Dorsolateral prefrontal cortex (tissue), 120 donors: ENCODE measurements at regions of chr2 and their contacts with region 1.

Region 1: GRCh38 chr2:229780856-229781773 is 66.8 kb upstream of the DNER start:
- DNase-seq: no peak
- H3K4me3 ChIP-seq: no peak overlapping the region
- H3K27ac ChIP-seq: peak overlapping the region in 51 of 59 donors; percentile 2 to 85 (median 67)
- H3K27me3 ChIP-seq: no peaks in the 10 kb centered on the region
- CTCF ChIP-seq: peak; percentile 76 to 96 (median 88)

Region 2: GRCh38 chr2:229572507-229573271 is 208.4 kb before region 1 on chr2:
- intact Hi-C with region 1: no loop called
- DNase-seq: no peak
- H3K4me3 ChIP-seq: no peak overlapping the region
- H3K27ac ChIP-seq: no peak overlapping the region
- H3K27me3 ChIP-seq: no peaks in the 10 kb centered on the region
- CTCF ChIP-seq: no peak

Region 3: DNA sequence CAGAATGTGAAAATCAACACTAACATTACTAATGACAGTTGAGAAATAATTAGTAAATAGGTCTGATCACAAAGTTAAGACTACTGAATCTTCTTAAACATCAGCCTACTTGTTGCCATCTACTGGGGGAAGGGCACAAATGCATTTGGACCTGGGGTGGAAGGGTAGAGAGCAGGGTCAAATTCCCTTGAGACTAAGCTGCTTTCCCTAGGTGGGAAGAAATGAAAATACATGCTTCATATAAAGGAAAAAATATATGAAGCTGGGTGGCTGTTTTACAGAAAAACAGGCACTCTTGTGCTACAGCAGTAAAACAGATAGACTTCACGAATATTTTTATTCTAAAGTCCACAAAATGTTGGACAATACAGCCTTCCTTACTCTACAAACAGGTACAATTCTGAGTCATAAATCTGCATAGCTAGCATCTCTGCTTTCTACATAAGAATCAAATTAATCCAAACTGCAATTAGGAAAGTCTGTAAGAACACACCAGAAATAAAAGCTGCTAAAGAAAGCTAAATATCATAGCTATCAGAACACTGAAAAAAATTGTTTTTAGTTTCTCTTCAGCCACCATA is 129.8 kb after region 1 on chr2:
- intact Hi-C with region 1: loop called in 1 of 2 experiments (anchors 10 kb)
- DNase-seq: no peak
- H3K4me3 ChIP-seq: no peak overlapping the region
- H3K27ac ChIP-seq: peak overlapping the region in 2 of 59 donors; percentile 13 to 14
- H3K27me3 ChIP-seq: no peaks in the 10 kb centered on the region
- CTCF ChIP-seq: peak in 48 of 56 donors; percentile 15 to 64 (median 44)